Pancreas (tissue), 10 donors: ENCODE measurements at regions of chr22 and their contacts with region 1.

Region 1: DNA sequence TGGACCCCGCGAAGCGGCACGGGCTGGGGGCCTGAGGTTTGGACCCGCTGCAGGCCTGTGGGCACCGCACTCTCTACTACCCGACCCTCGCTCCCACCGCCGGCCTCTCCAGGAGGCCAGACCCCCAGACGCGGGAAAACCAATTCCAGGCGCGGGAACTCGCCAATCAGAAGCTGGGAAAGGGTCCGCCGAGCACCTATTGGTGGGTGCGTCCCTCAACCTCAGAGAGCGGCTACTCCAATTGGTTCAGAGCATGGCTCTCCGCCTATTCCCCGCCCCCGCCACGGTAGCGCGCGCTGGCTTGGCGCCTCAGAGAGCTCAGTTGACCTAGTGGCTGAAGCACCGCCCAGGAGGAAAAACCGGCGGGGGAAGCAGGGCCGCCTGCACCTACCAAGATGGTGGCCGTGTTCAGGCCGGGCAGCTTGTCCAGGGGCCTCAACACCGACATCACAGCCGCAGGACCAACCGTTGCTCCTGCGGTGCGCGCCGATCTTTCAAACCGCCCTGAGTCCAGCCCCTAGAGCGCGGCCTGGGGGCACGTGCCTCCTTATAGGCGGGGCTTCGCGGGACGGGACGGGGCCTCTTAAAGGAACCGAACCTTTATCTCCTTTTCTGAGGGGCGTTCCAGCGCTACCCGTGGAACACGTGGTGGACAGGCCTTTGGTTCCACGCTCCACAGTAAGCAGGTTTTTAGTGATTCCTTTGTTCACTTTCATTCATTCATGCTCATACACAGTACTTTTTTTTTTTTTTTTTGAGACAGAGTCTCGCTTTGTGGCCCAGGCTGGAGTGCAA is at the start of gene CENPM:
- DNase-seq: peak; percentile 89 to 95 (median 92)
- ATAC-seq: peak; percentile 98 to 99 (median 98)
- H3K4me3 ChIP-seq: peak within 1 kb of the TSS; percentile 59 to 83 (median 76)
- H3K27ac ChIP-seq: peak within 1 kb of the TSS in 2 of 4 donors; percentile 10 to 16
- H3K4me1 ChIP-seq: peaks cover 0 to 7% (median 0%) of the 10 kb centered on the region in 3 donors
- H3K27me3 ChIP-seq: no peaks in the 10 kb centered on the region
- CTCF ChIP-seq: no peak
- total RNA-seq, gene CENPM: 0.23 to 1.7 (median 0.65) TPM

Region 2: DNA sequence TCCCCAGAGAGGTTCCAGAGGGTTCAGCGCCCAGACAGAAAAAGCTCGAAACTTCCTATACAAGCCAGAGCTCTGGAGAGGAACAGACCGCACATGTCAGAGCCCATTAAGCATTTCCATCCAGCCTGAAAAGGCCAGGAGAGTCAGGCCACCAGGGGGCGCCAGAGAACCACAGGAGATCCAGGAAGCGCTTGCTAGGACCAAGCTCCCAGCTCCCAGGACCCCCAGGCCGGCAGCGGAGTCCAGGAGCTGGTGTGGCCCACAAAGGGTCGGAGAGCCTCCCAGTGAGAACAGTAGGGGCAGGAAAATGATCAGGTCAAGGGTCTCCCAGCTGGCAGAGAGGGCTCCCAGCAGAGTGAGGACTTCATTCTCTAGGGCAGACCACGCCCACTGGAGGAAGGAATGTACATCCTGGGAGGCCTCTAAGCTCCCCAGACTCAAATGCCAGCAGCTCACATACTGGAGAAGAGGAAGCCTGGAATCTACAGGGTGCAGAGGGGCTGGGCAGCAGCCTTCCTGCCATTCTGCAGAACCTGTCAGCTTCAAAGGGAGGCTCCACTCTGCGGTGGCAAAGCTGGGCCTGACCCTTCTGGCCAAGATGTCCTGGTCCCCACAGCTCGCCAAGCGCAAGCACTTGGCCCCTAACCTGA is 249.6 kb before region 1 on chr22:
- intact Hi-C with region 1: loop called in 2 of 3 experiments (anchors 5 to 10 kb)
- DNase-seq: peak; percentile 76 to 100 (median 92)
- ATAC-seq: peak; percentile 77 to 92 (median 89)
- H3K4me3 ChIP-seq: peak overlapping the region in 1 of 4 donors; percentile 26
- H3K27ac ChIP-seq: peak overlapping the region in 2 of 4 donors; percentile 28 to 36
- H3K4me1 ChIP-seq: peaks cover 0 to 10% (median 0%) of the 10 kb centered on the region in 3 donors
- H3K27me3 ChIP-seq: no peaks in the 10 kb centered on the region
- CTCF ChIP-seq: peak; percentile 96 to 99 (median 98)

Region 3: DNA sequence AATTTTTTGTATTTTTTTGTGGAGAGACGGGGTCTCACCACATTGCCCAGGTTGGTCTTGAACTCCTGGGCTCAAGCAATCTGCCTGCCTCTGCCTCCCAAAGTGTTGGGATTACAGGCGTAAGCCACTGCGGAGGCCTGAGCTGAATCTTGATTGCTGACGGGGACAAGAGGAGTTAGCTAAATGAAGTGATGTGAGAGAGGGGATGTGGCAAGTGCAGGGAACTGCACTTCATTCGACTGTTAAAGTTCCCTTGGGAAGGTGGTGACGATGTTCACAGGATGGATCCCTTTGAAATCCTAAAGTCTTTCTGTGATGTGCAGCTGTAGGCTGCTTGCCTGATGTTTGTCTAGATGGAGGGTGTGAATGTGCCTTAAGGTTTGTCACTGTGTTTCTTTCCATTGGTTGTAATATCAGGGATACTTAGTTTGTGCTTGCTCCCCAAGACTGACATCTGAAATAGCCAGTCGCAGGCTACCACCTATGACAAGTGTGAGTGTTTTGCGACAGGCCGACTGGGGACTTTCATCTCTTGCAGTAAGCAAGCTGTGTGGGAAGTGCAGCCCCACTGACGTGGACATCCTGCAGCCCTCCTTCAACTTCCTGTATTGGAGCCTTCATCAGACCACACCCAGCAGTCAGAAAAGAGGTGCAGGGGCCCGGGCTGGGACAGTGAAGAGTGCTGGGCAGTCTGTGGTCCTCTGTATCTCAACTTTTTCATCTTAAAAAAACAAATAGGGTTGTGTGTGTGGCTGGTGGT is 165.9 kb before region 1 on chr22:
- intact Hi-C with region 1: no loop called
- DNase-seq: peak in 2 of 6 donors; percentile 9 to 39
- ATAC-seq: peak in 3 of 4 donors; percentile 55 to 76 (median 74)
- H3K4me3 ChIP-seq: no peak overlapping the region
- H3K27ac ChIP-seq: no peak overlapping the region
- H3K4me1 ChIP-seq: no peaks in the 10 kb centered on the region
- H3K27me3 ChIP-seq: no peaks in the 10 kb centered on the region
- CTCF ChIP-seq: no peak

Region 4: DNA sequence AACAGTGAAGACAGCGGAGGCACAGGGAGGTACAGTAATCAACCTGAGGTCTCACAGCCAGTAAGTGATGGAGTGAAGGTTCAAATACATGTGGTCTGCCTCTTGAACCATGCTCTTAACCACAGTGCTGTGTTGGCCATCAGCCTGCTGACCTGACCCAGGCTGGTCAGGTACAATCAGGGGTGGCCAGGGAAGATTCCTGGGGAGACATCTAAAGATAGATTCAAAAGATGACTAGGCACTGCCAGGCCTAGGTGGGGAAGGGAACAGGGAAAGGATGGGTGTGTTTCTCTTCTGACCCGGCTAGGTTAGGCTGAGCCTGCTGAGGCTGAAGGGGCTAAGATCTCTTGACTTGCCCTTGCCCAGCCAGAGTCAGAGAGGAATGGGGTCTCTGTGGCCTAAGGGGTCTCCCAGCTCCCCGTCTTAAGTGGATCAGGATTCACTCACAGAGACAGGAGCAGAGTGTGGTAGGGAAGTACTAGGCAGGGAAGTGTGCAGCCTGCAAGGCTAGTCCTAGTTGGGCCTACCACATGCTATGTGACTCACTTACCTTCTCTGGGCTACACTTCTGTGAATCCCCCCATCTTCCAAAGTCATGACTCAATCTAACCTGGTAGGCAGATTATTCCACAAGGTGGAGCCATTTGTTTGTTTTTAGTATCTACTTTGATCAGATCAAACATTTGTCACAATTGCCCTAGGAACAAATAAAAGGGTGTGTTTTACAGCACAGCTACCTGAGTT is 124.3 kb before region 1 on chr22:
- intact Hi-C with region 1: loop called in 2 of 3 experiments (anchors 5 to 10 kb)
- DNase-seq: no peak
- ATAC-seq: peak; percentile 47 to 72 (median 66)
- H3K4me3 ChIP-seq: no peak overlapping the region
- H3K27ac ChIP-seq: no peak overlapping the region
- H3K4me1 ChIP-seq: peaks cover 7 to 13% (median 9%) of the 10 kb centered on the region in 3 donors
- H3K27me3 ChIP-seq: no peaks in the 10 kb centered on the region
- CTCF ChIP-seq: peak in 2 of 4 donors; percentile 18 to 35

Region 5: GRCh38 chr22:41966607-41967240 is 19.9 kb after region 1 on chr22:
- intact Hi-C with region 1: no loop called
- DNase-seq: no peak
- ATAC-seq: peak in 3 of 4 donors; percentile 70 to 84 (median 75)
- H3K4me3 ChIP-seq: no peak overlapping the region
- H3K27ac ChIP-seq: no peak overlapping the region
- H3K4me1 ChIP-seq: no peaks in the 10 kb centered on the region
- H3K27me3 ChIP-seq: no peaks in the 10 kb centered on the region
- CTCF ChIP-seq: peak in 1 of 4 donors; percentile 15